ENCODE measurements at regions of chr5 and their contacts with region 1.

Region 1: GRCh38 chr5:139513852-139514485 is 31.4 kb upstream of the STING1 start:
- DNase-seq: no peak
- H3K4me3 ChIP-seq: no peak overlapping the region
- H3K27ac ChIP-seq: no peak overlapping the region
- H3K4me1 ChIP-seq: peaks cover 20% of the 10 kb centered on the region
- H3K27me3 ChIP-seq: no peaks in the 10 kb centered on the region
- CTCF ChIP-seq: peak; percentile 12

Region 2: DNA sequence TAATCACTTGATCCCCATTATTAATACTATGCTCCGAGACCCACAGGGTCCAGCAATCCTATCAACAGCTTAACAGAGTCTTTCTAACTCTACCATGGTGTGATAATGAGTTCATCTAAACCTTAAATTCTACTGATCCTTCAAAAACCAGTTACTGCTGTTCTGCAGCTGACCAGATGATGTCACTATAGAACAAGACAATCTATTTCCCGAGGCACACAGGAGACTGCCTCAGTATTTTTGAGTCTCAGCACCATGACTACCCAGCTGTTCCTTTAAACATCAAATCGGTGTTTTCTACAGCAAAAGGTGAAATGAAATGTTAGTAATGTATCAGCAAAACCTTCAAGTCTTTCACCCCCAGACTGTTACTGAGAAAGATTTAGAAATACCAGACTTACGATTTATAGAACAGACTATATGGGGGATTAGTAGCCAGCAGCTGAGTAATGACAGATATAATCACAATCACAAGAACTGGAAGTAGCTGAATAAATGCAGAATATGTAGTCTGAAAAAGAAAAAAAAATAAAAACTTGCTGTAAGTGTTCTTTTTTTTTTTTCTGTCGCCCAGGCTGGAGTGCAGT is 91.6 kb before region 1 on chr5:
- intact Hi-C with region 1: loop called (anchors 2 kb)
- DNase-seq: no peak
- H3K4me3 ChIP-seq: no peak overlapping the region
- H3K27ac ChIP-seq: no peak overlapping the region
- H3K4me1 ChIP-seq: peaks cover 35% of the 10 kb centered on the region
- H3K27me3 ChIP-seq: no peaks in the 10 kb centered on the region
- CTCF ChIP-seq: peak; percentile 90